WTC11 (cell line): ENCODE measurements at regions of chr1 and their contacts with region 1.

Region 1: GRCh38 chr1:23772049-23772853 is 6.0 kb upstream of the PITHD1 start:
- DNase-seq: peak; percentile 92
- ATAC-seq: peak; percentile 97
- H3K4me3 Mint-ChIP-seq: no peak overlapping the region
- H3K27ac Mint-ChIP-seq: no peak overlapping the region
- H3K4me1 Mint-ChIP-seq: peaks cover 4% of the 10 kb centered on the region; the same call in 1 of the 2 replicates
- H3K27me3 Mint-ChIP-seq: no peaks in the 10 kb centered on the region
- CTCF ChIP-seq: peak; percentile 87

Region 2: GRCh38 chr1:23484253-23485001 is 287.8 kb before region 1 on chr1:
- CTCF ChIA-PET with region 1: interaction called, 14 read pairs
- POLR2A ChIA-PET with region 1: no interaction called
- DNase-seq: peak; percentile 97
- ATAC-seq: peak; percentile 87
- H3K4me3 Mint-ChIP-seq: peak overlapping the region; percentile 82
- H3K27ac Mint-ChIP-seq: peak overlapping the region; percentile 96
- H3K4me1 Mint-ChIP-seq: peaks cover 44% of the 10 kb centered on the region
- H3K27me3 Mint-ChIP-seq: peaks cover 13% of the 10 kb centered on the region
- CTCF ChIP-seq: no peak

Region 3: GRCh38 chr1:23743287-23744052 is 28.8 kb before region 1 on chr1 and contains the start of gene ELOA:
- CTCF ChIA-PET with region 1: interaction called, 15 read pairs
- POLR2A ChIA-PET with region 1: no interaction called
- DNase-seq: peak; percentile 80
- ATAC-seq: peak; percentile 94
- H3K4me3 Mint-ChIP-seq: peak within 1 kb of the TSS; percentile 88
- H3K27ac Mint-ChIP-seq: peak within 1 kb of the TSS; percentile 81
- H3K4me1 Mint-ChIP-seq: peaks cover 29% of the 10 kb centered on the region
- H3K27me3 Mint-ChIP-seq: no peaks in the 10 kb centered on the region; the same call in 1 of the 2 replicates
- CTCF ChIP-seq: no peak
- total RNA-seq, gene ELOA: 35.9 to 45.1 TPM (median 36.6 TPM) in 3 replicates

Region 4: DNA sequence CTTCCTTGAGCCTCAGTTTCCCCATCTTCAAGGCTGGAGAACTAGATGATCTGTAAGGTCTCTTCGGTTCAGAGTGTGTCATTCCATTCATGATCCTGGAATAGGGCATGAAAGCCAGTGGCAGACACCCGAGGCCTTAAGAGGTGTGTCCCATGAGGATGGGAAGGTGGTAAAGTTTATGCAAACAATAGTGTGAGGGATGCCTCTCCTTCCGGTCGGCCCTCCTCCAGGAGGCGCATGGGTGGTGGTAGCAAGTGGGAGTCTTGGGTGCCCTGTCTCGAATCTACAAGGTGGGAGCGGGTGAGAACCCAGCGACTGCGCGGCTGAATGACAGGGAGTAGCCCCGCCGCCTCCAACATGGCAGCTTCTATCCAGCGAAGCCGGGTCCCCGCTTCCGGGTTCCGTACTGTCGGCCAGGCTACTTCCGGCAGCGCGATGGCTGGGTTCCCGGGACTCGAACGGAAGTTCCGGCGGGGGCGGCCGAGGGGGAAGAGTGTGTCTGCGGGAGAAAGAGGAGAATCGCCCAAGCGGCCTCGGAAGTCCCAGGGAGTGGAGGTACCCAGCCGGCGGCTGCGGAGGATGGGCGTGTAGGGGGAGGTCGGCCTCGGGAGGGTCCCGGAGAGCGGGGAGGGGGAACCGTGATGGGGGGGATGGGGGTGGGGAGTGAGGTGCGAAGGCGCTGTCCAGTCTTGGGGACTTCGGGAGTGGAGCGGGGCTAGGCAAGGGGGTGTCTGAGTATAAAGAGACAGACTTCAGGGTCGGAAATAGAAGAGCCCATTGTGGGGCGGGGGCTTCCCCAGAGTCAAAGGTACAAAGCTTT is 18.7 kb after region 1 on chr1 and contains the start of gene LYPLA2:
- CTCF ChIA-PET with region 1: interaction called, 16 read pairs
- POLR2A ChIA-PET with region 1: interaction called, 5 read pairs
- DNase-seq: peak; percentile 90
- ATAC-seq: peak; percentile 87
- H3K4me3 Mint-ChIP-seq: peak within 1 kb of the TSS; percentile 94
- H3K27ac Mint-ChIP-seq: peak within 1 kb of the TSS; percentile 78
- H3K4me1 Mint-ChIP-seq: peaks cover 15% of the 10 kb centered on the region
- H3K27me3 Mint-ChIP-seq: no peaks in the 10 kb centered on the region
- CTCF ChIP-seq: no peak
- total RNA-seq, gene LYPLA2: 131 to 164 TPM (median 134 TPM) in 3 replicates

Region 5: GRCh38 chr1:23825076-23825761 is 53.0 kb after region 1 on chr1 and contains the start of gene HMGCL:
- CTCF ChIA-PET with region 1: interaction called, 11 read pairs
- POLR2A ChIA-PET with region 1: no interaction called
- DNase-seq: peak; percentile 85
- ATAC-seq: peak; percentile 87
- H3K4me3 Mint-ChIP-seq: peak within 1 kb of the TSS; percentile 97
- H3K27ac Mint-ChIP-seq: peak within 1 kb of the TSS; percentile 95
- H3K4me1 Mint-ChIP-seq: peaks cover 8% of the 10 kb centered on the region
- H3K27me3 Mint-ChIP-seq: no peaks in the 10 kb centered on the region
- CTCF ChIP-seq: no peak
- total RNA-seq, gene HMGCL: 22.7 to 31.2 TPM (median 25.4 TPM) in 3 replicates

Region 6: DNA sequence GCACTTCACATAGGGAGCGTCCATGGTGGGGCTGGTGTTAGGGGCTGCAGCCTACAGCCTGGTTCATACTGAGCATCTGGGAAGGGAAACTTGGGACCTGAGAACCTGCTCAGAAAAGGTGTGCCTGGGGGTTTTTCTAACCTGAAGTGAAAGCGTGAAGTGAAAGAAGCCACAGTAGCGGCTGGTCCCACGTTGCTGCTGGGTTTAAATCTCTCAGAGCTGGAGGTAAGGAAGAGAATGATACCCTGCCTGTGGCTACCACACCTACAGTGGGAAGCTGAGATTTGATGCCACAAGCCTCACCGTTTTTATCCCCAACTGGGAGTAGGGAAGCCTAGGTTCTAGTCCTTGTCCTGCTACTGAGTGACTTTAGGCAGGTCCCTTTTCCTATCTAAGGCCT is 116.8 kb after region 1 on chr1:
- CTCF ChIA-PET with region 1: no interaction called
- POLR2A ChIA-PET with region 1: no interaction called
- DNase-seq: no peak
- ATAC-seq: no peak
- H3K4me3 Mint-ChIP-seq: no peak overlapping the region
- H3K27ac Mint-ChIP-seq: no peak overlapping the region
- H3K4me1 Mint-ChIP-seq: no peaks in the 10 kb centered on the region
- H3K27me3 Mint-ChIP-seq: no peaks in the 10 kb centered on the region
- CTCF ChIP-seq: no peak